Colonic mucosa (tissue), 4 donors: ENCODE measurements at regions of chr1 and their contacts with region 1.

Region 1: DNA sequence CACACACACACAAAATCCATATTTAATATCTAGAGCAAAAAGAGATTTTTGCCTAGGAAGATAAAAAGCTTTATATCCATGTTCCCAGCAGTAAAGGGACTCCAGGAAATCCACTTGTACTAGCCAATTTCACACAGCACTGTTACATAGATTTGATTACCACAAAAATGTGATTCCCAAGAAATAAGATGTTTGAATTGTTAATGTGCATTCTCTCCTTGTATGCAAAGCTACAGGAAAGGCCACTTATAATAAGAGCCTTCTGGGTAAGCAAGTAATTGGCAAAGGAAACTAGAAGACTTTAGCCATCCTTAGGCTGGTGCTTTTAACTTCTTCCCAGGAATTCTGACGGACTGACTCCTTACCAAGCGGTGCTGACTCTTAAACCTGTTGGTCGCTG is 89.3 kb downstream of the LBR start:
- DNase-seq: no peak
- H3K4me3 ChIP-seq: no peak overlapping the region
- H3K27ac ChIP-seq: no peak overlapping the region
- H3K4me1 ChIP-seq: no peaks in the 10 kb centered on the region
- H3K27me3 ChIP-seq: no peaks in the 10 kb centered on the region
- CTCF ChIP-seq: no peak

Region 2: DNA sequence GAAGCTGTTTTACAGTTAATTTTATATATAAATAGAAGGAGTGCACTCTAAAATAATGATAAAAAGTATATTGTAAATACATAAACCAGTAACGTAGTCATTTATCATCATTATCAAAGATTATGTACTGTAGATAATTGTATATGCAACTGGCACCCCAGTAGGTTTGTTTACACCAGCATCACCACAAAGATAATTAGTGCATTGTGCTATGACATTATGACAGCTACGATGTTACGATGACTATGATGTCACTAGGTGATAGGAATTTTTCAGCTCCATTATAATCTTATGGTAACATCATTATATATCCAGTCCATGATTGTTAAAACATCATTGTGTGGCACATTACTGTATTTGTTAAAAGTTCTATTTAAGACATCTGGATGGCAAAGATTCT is 95.9 kb before region 1 on chr1:
- intact Hi-C with region 1: no loop called
- DNase-seq: no peak
- H3K4me3 ChIP-seq: no peak overlapping the region
- H3K27ac ChIP-seq: no peak overlapping the region
- H3K4me1 ChIP-seq: no peaks in the 10 kb centered on the region
- H3K27me3 ChIP-seq: no peaks in the 10 kb centered on the region
- CTCF ChIP-seq: no peak

Region 3: GRCh38 chr1:225406976-225407725 is 68.6 kb after region 1 on chr1:
- intact Hi-C with region 1: loop called (anchors 10 kb)
- DNase-seq: no peak
- H3K4me3 ChIP-seq: no peak overlapping the region
- H3K27ac ChIP-seq: no peak overlapping the region
- H3K4me1 ChIP-seq: no peaks in the 10 kb centered on the region
- H3K27me3 ChIP-seq: no peaks in the 10 kb centered on the region
- CTCF ChIP-seq: no peak